ENCODE measurements at regions of chr20 and their contacts with region 1.

Region 1: DNA sequence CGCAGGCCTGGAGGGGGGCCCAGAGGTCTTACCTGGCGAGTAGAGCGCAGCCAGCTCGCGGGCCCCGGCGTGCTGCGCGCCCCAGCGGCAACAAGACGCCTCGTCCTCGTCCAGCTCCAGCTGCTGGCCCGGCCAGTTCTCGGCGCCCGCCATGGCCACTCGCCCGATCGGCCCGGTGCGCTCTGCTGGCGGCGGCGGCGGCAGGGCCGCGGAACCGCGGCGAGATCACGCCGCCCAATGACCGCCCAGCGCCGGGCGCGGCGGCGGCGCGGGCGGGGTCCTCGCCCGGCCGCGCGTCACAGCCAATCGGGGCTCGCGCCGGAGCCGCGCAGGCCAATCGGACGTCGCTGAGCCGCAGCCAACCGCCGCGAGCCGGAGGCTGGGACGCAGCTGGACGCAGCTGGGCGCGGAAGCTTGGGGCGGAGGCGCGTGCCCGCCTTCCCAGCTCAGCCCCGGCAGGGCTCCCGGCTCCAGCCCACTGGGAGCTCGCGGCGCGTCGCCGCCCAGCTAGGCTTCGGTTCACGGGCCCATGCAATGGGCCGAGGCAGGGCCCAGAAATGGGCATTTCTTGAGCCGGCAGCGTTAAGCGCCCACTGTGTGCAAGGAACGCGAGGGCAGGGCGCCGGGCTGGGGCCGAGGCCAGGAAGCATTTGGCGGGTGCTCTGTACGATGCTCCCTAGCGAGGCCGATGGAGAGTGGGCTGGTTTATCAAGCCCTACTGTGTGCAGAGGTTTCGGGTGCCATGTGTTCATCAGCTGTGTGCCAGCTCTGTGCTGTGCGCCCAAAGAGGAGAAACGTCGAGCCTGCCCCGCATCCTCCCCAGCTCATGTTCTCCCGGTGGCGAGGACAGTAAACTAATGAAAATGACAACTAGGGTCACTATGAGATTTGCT is at the start of gene PEDS1:
- DNase-seq: peak; percentile 96

Region 2: DNA sequence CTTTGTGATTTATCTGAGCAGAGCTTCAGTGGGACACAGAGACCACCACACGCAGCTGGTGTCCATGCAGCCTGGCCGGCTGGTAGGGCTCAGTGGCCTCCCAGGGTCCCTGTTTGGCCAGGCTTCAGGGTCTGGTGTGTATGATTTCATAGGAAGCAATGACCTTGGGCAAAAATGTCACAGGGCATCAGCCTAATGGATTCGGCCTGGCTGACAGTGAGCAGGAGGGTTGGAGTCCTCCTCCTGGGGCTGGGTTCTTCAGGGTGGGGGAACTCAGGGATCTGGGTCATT is 88.5 kb before region 1 on chr20:
- CTCF ChIA-PET with region 1: no interaction called
- POLR2A ChIA-PET with region 1: no interaction called
- DNase-seq: no peak

Region 3: GRCh38 chr20:50115591-50116372 is 37.9 kb before region 1 on chr20:
- CTCF ChIA-PET with region 1: interaction called, 3 read pairs
- POLR2A ChIA-PET with region 1: interaction called, 39 read pairs
- DNase-seq: peak; percentile 91

Region 4: GRCh38 chr20:50120897-50121693 is 32.6 kb before region 1 on chr20:
- CTCF ChIA-PET with region 1: interaction called, 3 read pairs
- POLR2A ChIA-PET with region 1: interaction called, 39 read pairs
- DNase-seq: peak; percentile 42

Region 5: DNA sequence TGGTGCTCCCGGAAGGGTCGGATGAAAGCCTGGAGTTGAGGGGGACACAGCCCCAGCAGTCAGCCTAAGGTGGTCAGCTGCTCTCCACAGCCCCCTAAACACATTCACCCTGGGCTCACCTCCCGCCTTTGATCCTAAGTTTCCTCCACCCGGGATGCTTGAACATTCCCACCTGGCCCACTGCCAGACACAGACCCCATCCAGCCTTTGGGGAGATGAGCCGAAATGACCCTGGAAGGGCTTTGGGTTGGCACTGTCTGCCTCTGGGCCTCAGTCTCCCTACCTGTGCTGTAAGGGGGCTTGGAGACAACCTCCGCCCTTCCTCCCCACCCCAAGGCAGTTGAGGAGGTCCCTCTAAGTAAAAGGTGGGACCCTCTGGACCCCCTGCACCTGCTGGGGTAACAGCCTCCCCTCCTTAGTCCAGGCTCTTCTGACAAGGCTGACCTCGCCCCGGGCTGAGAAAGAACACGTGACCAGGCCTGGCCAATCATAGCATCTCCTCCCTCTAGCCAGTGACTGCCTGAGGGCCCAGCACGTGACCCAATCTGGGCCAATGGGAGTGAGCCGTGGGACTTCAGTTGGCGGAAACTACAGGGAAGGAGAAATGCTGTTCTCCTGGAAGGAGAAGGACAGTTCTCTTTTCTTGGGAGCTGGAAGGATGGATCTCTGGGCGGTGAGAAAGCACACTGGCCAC is 23.9 kb before region 1 on chr20:
- CTCF ChIA-PET with region 1: no interaction called
- POLR2A ChIA-PET with region 1: interaction called, 11 read pairs
- DNase-seq: peak; percentile 46

Region 6: DNA sequence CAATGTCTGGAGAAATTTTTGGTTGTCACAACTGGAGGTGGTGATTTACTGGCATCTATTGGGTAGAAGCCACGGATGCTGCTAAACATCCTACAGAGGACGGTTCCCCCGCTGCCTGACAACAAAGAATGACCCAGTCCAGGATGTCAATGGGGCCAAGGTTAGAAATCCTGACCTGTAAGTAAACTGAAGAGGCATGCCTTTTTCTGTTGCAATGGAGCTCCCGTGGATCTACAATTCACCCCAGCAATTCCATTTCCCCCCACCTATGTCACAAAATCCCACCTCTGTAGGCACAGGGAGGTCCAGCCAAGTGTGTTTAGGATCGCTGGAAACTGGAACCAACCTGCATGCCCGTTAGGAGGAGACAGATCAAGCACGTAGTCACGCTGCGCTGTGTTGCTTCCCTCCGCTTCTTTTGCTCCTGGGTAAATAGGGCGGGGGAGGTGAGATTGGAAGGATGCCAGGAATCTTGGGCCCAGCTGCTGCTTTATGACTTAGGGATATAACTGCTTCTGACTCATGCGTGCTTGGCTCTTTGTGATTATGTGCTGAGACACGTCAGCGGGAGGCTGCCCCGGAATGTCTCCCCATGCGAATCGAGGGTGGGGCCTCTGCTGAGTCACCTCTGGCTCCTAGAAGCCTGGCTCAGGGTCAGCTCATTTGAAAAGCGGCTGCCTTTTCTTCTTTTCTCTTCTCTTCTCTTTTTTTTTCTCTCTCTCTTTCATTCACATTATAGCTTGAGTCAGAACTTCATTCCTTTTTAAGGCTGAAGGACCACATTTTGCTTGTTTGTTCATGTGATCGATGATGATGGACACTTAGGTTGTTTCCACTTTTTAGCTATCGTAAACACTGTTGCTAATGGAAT is 12.2 kb after region 1 on chr20:
- CTCF ChIA-PET with region 1: interaction called, 5 read pairs
- POLR2A ChIA-PET with region 1: interaction called, 27 read pairs
- DNase-seq: peak; percentile 93

Region 7: DNA sequence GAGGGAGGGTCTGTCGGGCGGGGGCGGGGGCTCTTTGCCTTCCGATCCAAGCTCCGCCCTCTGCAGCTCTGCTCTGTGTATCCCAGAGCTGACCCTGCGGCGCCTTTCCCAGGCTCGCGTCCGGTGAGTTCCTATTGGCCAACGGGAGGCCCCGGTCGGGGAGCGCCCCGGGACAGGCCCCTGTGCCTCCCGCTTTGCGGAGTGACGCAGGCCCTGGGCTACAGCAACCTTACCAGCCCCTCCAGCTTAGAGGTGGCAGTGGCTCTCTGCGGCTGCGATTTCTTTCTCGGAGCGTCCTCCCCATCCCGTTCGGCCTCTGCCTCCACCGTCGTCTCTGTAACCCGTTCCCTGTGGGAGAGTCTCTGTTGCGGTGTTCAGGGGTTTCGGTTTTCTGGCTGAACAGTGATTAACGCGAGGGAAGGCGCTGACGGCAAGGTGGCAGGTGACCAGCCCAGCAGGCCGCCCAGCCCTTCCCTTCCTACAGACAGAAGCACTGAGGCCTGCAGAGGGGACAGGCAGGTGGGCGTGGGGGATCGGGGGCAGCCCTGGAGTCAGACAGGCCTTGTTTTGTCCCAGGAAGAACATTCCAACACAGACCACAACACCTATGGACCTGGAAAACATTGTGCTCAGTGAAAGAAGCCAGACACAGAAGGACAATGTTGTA is 18.7 kb after region 1 on chr20:
- CTCF ChIA-PET with region 1: interaction called, 5 read pairs
- POLR2A ChIA-PET with region 1: interaction called, 27 read pairs
- DNase-seq: peak; percentile 67

Region 8: DNA sequence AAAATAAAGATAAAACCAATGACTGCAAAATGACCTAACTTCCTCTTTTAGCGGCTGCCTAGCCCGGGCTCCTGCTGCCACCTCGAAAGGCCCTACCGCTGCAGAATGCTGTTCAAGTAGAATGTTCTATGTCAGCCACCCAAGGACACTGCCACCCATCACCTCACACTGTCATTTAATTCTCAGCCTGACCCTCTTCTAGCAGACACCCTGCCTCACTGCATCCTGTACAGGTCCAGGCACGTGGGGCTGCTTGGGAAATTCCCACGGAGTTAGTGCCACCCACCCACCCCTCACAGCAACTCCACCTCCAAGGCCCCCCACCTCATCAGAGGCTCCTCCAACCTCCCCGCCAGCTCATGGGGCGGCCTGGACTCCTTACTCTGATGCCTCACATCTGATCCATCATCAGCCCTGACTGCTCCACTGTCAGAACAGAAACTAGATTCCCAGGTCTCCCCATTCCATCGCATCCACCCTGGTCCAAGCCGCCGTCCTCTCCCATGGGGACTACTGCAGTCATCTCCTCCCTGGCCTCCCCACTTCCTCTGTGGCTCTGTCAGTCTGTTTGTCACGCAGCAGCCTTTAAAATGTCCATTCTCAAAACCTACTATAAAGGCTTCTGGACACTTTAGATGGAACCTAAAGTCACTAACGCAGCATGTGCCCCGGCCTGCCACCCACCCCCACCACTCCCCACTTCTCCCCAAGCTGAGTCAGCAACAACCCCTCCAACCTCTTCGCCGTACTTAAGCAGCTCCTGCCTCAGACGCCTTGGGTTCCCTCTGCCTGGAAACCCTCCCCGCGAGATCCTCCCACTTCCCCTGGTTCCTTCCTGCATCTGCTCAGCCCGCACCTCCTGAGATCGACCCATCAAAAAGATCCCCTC is 1371.8 kb after region 1 on chr20:
- CTCF ChIA-PET with region 1: no interaction called
- POLR2A ChIA-PET with region 1: no interaction called
- DNase-seq: no peak